ENCODE measurements at regions of chr1 and their contacts with region 1.

Region 1: GRCh38 chr1:3618881-3619671 is 5.7 kb upstream of the TPRG1L start:
- DNase-seq: peak; percentile 72
- H3K4me3 Mint-ChIP-seq: no peak overlapping the region
- H3K27ac Mint-ChIP-seq: no peak overlapping the region
- H3K4me1 Mint-ChIP-seq: peaks cover 18% of the 10 kb centered on the region
- H3K27me3 Mint-ChIP-seq: peaks cover 10% of the 10 kb centered on the region

Region 2: DNA sequence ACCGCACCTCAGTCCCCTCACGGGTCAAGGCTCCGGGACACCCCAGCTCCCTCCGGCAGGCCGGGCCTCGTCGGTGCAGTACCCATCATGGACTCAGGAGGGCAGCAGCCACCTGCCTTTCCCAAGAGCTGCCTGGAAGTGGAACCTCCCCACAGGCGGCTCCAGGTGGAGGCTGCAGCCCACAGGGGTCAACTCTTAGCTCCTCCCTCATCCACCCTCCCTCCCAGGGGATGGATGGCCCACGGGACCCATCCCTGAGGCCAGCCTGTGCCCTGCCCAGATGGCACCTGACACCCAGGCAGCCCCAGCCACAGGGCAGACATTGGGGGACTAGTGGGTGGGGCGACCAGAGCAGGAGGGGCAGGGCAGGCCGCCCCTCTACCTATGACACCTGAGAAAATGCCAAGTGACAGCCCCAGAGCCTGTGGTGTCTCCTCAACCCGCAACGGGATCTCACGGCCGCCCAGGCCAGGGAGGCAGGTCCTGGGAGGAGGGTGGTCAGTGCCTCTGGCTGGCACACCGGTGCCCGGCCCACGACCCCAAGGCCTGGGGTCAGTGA is 165.8 kb before region 1 on chr1:
- CTCF ChIA-PET with region 1: interaction called, 22 read pairs
- POLR2A ChIA-PET with region 1: no interaction called
- DNase-seq: peak; percentile 69
- H3K4me3 Mint-ChIP-seq: no peak overlapping the region
- H3K27ac Mint-ChIP-seq: no peak overlapping the region
- H3K4me1 Mint-ChIP-seq: peaks cover 4% of the 10 kb centered on the region
- H3K27me3 Mint-ChIP-seq: peaks cover 18% of the 10 kb centered on the region

Region 3: GRCh38 chr1:3491291-3492246 is 127.5 kb before region 1 on chr1:
- CTCF ChIA-PET with region 1: interaction called, 40 read pairs
- POLR2A ChIA-PET with region 1: no interaction called
- DNase-seq: peak; percentile 78
- H3K4me3 Mint-ChIP-seq: no peak overlapping the region
- H3K27ac Mint-ChIP-seq: no peak overlapping the region
- H3K4me1 Mint-ChIP-seq: peaks cover 2% of the 10 kb centered on the region
- H3K27me3 Mint-ChIP-seq: no peaks in the 10 kb centered on the region

Region 4: DNA sequence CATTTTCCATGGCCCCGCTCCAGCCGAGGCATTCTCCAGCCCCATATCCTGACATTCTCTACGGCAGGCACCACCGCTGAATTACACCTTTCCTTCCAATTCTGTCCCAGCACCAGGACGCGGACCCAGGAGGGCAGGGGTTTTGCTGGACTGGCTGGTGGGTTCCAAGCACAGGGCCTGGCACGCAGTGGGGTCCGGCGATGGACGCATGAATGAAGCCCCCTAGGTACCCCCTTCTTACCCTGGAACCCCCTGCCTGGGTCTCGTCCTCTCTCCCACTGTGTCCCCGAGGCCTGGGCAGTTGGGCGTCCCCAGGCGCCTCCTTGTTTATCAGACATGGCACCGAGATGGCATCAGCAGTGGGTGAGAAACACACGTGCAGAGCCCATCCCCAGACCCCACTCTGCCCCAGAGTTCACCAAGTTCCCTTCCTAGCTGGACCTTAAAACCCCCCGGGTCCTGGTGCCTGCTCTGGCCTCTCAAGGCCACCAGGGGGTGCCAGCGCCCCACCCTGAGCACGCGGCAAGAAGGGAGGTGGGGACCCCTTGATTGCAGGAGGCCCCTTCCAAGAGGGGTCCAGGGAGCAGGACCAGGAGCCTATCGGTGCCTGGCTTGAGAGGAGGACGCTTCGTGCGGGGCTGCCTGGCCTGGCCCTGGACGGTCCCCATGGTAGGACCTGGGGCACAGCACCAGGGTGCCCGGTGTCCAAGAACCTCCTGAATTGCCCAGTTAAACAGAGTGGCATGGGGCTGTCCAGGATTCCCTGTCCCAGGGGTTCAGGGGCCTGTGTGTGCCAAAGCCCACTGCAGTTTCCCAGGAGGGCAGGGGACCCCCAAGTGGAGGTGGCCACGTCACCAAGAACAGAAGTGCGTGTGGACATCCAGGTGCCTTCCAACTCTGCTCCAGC is 53.9 kb before region 1 on chr1:
- CTCF ChIA-PET with region 1: interaction called, 21 read pairs
- POLR2A ChIA-PET with region 1: no interaction called
- DNase-seq: peak; percentile 24
- H3K4me3 Mint-ChIP-seq: no peak overlapping the region
- H3K27ac Mint-ChIP-seq: no peak overlapping the region
- H3K4me1 Mint-ChIP-seq: no peaks in the 10 kb centered on the region
- H3K27me3 Mint-ChIP-seq: no peaks in the 10 kb centered on the region

Measured in activated CD4-positive, alpha-beta memory T cell treated with anti-CD3 and anti-CD28 coated beads, Interleukin-2, amount 10 ng/mL, durations not matched to agents 7 days and 5 days (primary cell).